A549 (cell line): ENCODE measurements at regions of chr1 and their contacts with region 1.

Region 1: DNA sequence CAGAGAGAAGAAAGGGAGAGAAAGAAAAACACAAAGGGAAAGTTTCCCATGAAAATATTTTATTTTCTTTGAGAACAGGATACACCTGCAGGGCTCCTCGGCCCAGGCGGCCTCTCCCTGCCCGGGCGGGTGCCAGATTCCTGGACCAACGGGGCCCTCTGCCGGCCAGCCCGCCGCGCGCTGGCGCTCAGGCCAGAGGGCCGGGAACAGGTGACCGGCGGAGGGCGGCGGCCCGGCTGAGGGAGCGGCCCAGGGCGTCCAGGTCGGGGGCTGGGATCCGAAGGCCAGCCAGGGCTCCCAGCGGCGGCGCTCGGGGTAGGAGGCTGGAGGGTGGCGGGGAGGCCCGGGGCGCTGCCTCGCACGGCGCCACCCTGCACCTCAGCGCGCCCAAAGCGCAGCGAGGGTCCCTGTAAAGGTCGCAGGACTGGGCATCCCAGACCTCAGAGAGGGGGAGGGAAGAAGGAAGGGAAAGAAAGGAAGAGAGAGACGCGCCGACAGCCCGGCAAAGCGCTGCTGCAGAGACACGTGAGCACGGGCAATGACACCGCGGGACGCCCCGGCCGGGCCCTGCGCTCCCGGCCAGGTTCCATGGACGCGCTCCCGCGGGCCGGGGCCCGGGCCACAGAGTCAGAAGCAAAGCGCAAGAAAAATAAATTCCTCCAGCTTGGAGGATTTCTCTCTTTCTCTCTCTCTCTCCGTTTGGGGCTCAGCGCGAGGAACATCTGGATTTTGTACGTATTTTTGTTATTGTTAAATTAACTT is 927 bp downstream of the WNT9A start:
- DNase-seq: peak; percentile 80 to 86
- ATAC-seq: peak; percentile 76 to 93
- H3K4me3 ChIP-seq: peak overlapping the region; percentile 66
- H3K27ac ChIP-seq: peak overlapping the region; percentile 67 to 89
- H3K4me1 ChIP-seq: peaks cover 12% of the 10 kb centered on the region
- CTCF ChIP-seq: peak; percentile 95
- EP300 ChIP-seq: no peak
- POLR2A ChIP-seq: no peak
- RAD21 ChIP-seq: peak; percentile 90 to 98

Region 2: GRCh38 chr1:227729881-227730627 is 216.8 kb before region 1 on chr1:
- CTCF ChIA-PET with region 1: interaction called, 11 read pairs
- POLR2A ChIA-PET with region 1: interaction called, 5 read pairs
- DNase-seq: peak; percentile 55 to 69
- ATAC-seq: peak in 1 of 2 experiments; percentile 35; a peak in 3 of 6 replicates
- H3K4me3 ChIP-seq: no peak overlapping the region
- H3K27ac ChIP-seq: no peak overlapping the region
- H3K4me1 ChIP-seq: peaks cover 12% of the 10 kb centered on the region; the same call in 2 of the 3 replicates
- CTCF ChIP-seq: peak; percentile 31; the same call in 2 of the 3 replicates
- EP300 ChIP-seq: no peak
- POLR2A ChIP-seq: no peak
- RAD21 ChIP-seq: peak in 1 of 2 experiments; percentile 23; a peak in 2 of 5 replicates

Region 3: DNA sequence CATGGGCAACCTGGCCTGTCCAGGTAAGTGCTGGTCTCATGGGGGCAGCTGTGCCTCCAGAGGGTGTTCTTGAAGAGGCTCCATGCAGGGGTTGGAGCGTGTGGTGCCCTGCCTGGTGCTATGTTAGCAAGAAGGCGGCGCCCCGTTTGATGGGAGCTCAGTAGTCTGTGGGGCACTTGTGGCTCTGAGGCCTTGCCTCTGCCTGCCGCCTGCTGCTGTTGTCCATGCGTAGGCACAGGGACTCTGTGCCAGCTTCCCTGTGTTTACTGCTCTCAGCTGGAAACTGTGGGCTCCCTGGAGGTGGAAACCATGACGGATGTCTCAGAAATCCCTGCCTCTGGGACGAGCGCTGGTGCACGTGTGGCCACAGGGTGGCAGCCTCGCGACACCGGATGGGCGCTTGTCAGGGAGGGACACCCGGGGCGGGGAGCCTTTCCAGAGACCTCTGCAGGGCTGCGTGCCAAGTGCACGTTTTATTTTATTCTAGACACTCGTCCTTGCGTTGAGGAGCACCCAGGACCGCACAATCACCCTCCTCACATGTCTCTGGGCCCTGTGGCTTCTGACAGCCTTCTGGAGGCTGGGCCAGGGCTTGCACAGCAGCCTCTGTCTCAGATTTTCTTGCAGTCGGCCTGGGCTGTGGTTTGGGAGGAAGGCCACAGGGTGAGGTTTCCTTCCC is 184.4 kb before region 1 on chr1:
- CTCF ChIA-PET with region 1: interaction called, 166 read pairs
- POLR2A ChIA-PET with region 1: no interaction called
- DNase-seq: peak; percentile 79 to 98
- ATAC-seq: peak; percentile 86 to 95
- H3K4me3 ChIP-seq: no peak overlapping the region
- H3K27ac ChIP-seq: peak overlapping the region; percentile 62 to 74; a peak in 3 of 6 replicates
- H3K4me1 ChIP-seq: peaks cover 34% of the 10 kb centered on the region
- CTCF ChIP-seq: peak; percentile 89
- EP300 ChIP-seq: no peak
- POLR2A ChIP-seq: no peak
- RAD21 ChIP-seq: peak; percentile 91 to 94

Region 4: DNA sequence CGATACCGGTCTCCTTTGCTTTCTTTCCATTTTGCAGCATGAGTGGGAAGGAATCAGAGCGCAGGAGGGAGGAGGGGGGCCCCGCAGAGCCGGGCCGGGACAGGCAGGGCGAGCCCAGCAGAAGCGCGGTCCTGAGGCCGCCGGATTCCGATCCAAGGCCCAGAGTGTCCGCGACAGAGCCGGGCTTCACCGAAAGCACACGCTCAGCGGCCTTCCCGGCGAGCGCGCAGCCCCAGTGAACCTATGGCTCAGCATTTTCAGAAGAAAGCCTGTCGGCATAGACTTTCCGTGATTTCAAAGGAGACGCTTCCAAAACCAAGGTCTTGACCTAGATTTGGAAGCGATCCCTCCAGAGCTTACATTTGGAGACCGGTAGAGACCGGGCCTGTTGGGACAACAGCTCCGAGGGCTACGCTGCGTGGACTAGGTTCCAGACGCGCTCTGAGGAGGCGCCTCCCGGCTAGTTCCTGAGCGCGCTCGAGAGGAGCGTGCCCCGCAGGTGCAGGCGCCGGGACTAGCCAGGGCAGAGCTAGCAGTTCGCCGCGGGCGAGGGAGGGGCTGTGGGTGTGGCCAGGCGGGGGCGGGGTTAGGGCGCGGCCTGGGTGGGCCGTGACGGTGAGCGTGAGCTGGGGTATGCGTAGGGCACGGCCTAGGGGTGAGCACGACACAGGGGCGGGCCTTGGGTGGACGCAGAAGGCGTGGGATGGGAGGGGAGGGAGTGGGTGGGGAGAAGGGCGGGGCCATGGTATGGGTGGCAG is 159.1 kb before region 1 on chr1:
- CTCF ChIA-PET with region 1: interaction called, 19 read pairs
- POLR2A ChIA-PET with region 1: interaction called, 4 read pairs
- DNase-seq: peak; percentile 89 to 96
- ATAC-seq: peak; percentile 85 to 92
- H3K4me3 ChIP-seq: peak overlapping the region; percentile 57
- H3K27ac ChIP-seq: peak overlapping the region; percentile 71 to 77
- H3K4me1 ChIP-seq: peaks cover 4% of the 10 kb centered on the region; the same call in 2 of the 3 replicates
- CTCF ChIP-seq: no peak
- EP300 ChIP-seq: no peak
- POLR2A ChIP-seq: peak; percentile 40; the same call in 1 of the 2 replicates
- RAD21 ChIP-seq: no peak

Region 5: GRCh38 chr1:228165372-228166169 is 218.8 kb after region 1 on chr1 and contains the start of gene IBA57:
- CTCF ChIA-PET with region 1: no interaction called
- POLR2A ChIA-PET with region 1: no interaction called
- DNase-seq: peak; percentile 96 to 99
- ATAC-seq: peak; percentile 82 to 90
- H3K4me3 ChIP-seq: peak within 1 kb of the TSS; percentile 66
- H3K27ac ChIP-seq: peak within 1 kb of the TSS; percentile 97 to 100
- H3K4me1 ChIP-seq: peaks cover 11% of the 10 kb centered on the region; the same call in 2 of the 3 replicates
- CTCF ChIP-seq: peak; percentile 94
- EP300 ChIP-seq: peak in 1 of 2 experiments; percentile 15; a peak in 1 of 5 replicates
- POLR2A ChIP-seq: peak; percentile 82
- RAD21 ChIP-seq: no peak; a peak in 1 of 5 replicates
- polyA plus RNA-seq, gene IBA57: 1.5 TPM in 2 replicates